Left colon (tissue), 2 donors: ENCODE measurements at regions of chr1 and their contacts with region 1.

Region 1: DNA sequence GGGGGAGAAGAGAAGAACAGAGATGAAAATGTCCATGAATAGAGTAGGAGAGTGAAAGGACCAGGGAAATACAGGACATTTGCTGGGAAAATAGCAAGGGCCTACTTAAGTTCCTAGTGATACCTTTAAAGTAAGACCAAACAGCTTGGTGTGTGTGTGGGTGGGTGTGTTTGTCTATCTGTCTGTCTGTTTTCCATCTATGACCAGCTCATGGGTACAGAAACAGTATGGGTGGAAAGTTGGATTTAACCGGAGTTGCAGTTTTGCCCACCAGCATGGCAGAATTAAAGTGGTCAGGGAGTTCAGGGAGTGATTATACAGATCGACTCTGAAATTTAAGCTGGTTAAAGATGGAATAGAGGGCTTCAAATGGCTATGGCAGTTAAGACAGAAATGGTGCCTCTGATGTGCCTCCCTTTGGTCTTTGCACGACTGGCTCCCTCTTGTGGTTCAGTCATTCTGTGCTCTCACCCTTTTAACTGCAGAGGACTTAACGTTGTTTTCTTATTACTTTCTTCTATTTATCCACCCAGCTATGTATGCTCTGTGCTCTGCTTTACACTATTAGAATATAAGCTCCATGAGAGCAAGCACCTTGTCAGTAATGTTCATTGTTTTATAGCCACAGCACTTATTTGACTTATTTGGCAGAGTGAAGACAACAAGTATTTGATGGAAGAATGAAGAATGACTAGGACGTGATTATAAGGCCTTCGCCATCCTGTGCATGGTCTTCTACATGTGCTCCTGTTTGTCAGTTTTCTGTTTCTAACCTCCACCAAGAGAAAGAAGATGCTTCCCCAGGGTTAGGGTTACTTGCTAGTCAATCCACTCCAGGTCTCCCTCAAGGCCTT is 72.7 kb upstream of the AK4 start:
- DNase-seq: peak; percentile 51 to 54
- ATAC-seq: peak; percentile 84

Region 2: GRCh38 chr1:65209005-65209885 is 133.9 kb after region 1 on chr1:
- intact Hi-C with region 1: loop called in 1 of 2 experiments (anchors 10 kb)
- DNase-seq: peak in 1 of 2 donors; percentile 9
- ATAC-seq: peak; percentile 71